ENCODE measurements at regions of chr2 and their contacts with region 1.

Region 1: GRCh38 chr2:181466661-181467576 is 9.7 kb downstream of the ITGA4 start:
- DNase-seq: peak; percentile 90
- ATAC-seq: peak; percentile 22
- H3K4me3 Mint-ChIP-seq: no peak overlapping the region
- H3K27ac Mint-ChIP-seq: peak overlapping the region; percentile 17
- H3K4me1 Mint-ChIP-seq: peaks cover 86% of the 10 kb centered on the region
- H3K27me3 Mint-ChIP-seq: no peaks in the 10 kb centered on the region

Region 2: GRCh38 chr2:180125245-180125962 is 1341.5 kb before region 1 on chr2:
- CTCF ChIA-PET with region 1: no interaction called
- POLR2A ChIA-PET with region 1: no interaction called
- intact Hi-C with region 1: loop called in 1 of 2 experiments (anchors 10 kb)
- DNase-seq: peak; percentile 60
- ATAC-seq: peak; percentile 88
- H3K4me3 Mint-ChIP-seq: no peak overlapping the region
- H3K27ac Mint-ChIP-seq: no peak overlapping the region
- H3K4me1 Mint-ChIP-seq: peaks cover 1% of the 10 kb centered on the region
- H3K27me3 Mint-ChIP-seq: peaks cover 7% of the 10 kb centered on the region

Region 3: GRCh38 chr2:181077128-181077709 is 389.7 kb before region 1 on chr2:
- CTCF ChIA-PET with region 1: interaction called, 4 read pairs
- POLR2A ChIA-PET with region 1: no interaction called
- intact Hi-C with region 1: loop called in 1 of 2 experiments (anchors 5 kb)
- DNase-seq: no peak
- ATAC-seq: peak; percentile 90
- H3K4me3 Mint-ChIP-seq: no peak overlapping the region
- H3K27ac Mint-ChIP-seq: no peak overlapping the region
- H3K4me1 Mint-ChIP-seq: peaks cover 5% of the 10 kb centered on the region
- H3K27me3 Mint-ChIP-seq: no peaks in the 10 kb centered on the region

Region 4: GRCh38 chr2:181683518-181684453 is 216.9 kb after region 1 on chr2:
- CTCF ChIA-PET with region 1: no interaction called
- POLR2A ChIA-PET with region 1: no interaction called
- intact Hi-C with region 1: loop called in 1 of 2 experiments (anchors 10 kb)
- DNase-seq: peak; percentile 46
- ATAC-seq: peak; percentile 40
- H3K4me3 Mint-ChIP-seq: peak overlapping the region; percentile 59
- H3K27ac Mint-ChIP-seq: no peak overlapping the region
- H3K4me1 Mint-ChIP-seq: peaks cover 35% of the 10 kb centered on the region
- H3K27me3 Mint-ChIP-seq: peaks cover 79% of the 10 kb centered on the region

Region 5: DNA sequence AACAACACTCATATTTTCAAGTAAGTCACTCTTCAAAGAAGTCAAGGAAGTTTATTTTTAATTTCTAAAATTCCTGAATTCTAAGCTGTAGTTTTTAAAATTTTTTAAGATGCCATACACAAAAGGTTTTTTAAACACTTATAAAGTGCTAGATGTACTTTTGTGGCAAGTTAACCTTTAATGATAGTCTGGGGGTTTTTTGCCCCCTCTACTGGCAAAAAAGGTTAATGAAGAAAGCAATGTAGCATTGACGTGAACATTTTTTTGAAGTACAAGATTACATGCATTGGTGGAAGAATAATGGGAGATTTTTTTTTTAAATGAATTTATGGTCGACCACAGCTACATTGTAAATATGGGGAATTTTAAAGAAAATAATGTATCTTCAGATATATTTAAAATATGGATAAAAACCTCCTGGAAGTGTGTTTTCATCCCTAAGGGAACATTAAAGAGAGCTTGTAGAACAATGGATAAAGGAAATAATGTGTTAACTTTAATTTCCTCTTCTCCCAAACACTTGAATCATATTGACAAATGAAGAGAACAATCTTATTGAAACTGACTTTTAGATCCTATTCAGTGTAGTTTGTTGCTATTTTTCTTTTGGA is 437.2 kb after region 1 on chr2:
- CTCF ChIA-PET with region 1: no interaction called
- POLR2A ChIA-PET with region 1: no interaction called
- intact Hi-C with region 1: loop called in 1 of 2 experiments (anchors 5 kb)
- DNase-seq: no peak
- ATAC-seq: no peak
- H3K4me3 Mint-ChIP-seq: no peak overlapping the region
- H3K27ac Mint-ChIP-seq: no peak overlapping the region
- H3K4me1 Mint-ChIP-seq: peaks cover 21% of the 10 kb centered on the region
- H3K27me3 Mint-ChIP-seq: no peaks in the 10 kb centered on the region